ENCODE measurements at regions of chr2 and their contacts with region 1.

Region 1: DNA sequence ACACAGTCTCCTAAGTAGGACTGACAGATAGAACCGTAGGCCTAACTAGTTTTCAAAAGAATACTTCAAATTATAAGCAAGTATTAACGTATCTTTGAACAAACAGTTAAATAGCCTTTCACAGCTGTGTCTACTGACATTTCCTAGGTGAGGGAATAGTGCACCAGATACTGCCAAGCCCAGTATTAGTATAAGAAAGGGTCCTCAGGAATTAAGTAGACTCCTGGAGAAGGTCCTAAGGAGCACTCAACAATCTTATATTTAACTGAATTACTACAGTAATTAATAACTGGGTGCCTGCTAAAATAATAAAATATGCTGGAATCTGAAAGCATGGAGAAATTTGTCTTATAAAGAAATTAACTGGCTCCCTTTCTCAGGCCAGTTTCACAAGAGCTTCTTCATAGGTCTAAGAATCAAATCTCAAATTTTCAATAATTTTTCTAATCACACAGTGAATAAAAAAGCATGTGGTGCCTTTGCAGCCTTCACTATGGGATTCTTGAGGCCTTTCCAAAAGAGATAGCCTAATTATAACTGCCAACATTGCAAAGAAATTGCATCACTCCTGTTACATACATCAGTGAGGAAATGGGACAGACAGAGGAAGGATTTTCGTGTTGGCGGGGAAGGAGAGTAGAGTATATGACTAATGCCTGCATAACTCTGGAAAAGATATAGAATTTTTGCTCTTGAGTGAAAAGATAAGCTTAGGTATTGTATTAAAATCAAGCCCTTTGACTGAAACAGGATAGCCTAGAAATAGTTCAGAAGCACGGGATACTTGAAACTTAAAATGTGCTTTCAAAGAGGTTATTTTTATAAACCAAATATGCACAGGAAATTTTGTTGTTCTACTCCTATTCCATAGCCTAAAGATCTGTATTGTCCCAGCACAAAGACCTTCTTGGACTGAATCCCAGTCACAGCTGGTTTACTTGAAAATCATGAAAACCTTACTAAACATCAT is 228.6 kb upstream of the STK17B start:
- DNase-seq: peak; percentile 97
- H3K4me3 ChIP-seq: no peak overlapping the region
- H3K27ac ChIP-seq: peak overlapping the region; percentile 94
- H3K4me1 ChIP-seq: peaks cover 58% of the 10 kb centered on the region
- H3K27me3 ChIP-seq: no peaks in the 10 kb centered on the region
- CTCF ChIP-seq: no peak
- POLR2A ChIP-seq: peak; percentile 66

Region 2: GRCh38 chr2:196259507-196260481 is 140.2 kb before region 1 on chr2:
- CTCF ChIA-PET with region 1: no interaction called
- POLR2A ChIA-PET with region 1: no interaction called
- dilution Hi-C with region 1: no loop called
- intact Hi-C with region 1: no loop called
- DNase-seq: peak; percentile 76
- H3K4me3 ChIP-seq: no peak overlapping the region
- H3K27ac ChIP-seq: peak overlapping the region; percentile 74
- H3K4me1 ChIP-seq: peaks cover 41% of the 10 kb centered on the region
- H3K27me3 ChIP-seq: no peaks in the 10 kb centered on the region
- CTCF ChIP-seq: no peak
- POLR2A ChIP-seq: peak; percentile 17

Region 3: GRCh38 chr2:196277002-196277401 is 123.0 kb before region 1 on chr2:
- CTCF ChIA-PET with region 1: interaction called, 6 read pairs
- POLR2A ChIA-PET with region 1: interaction called, 3 read pairs
- dilution Hi-C with region 1: no loop called
- intact Hi-C with region 1: loop called (anchors 1 kb)
- DNase-seq: peak; percentile 46
- H3K4me3 ChIP-seq: peak overlapping the region in 2 of 3 experiments; percentile 38 to 60
- H3K27ac ChIP-seq: peak overlapping the region; percentile 14
- H3K4me1 ChIP-seq: peaks cover 58% of the 10 kb centered on the region
- H3K27me3 ChIP-seq: no peaks in the 10 kb centered on the region
- CTCF ChIP-seq: peak; percentile 32 to 41
- POLR2A ChIP-seq: no peak

Region 4: GRCh38 chr2:196337208-196337953 is 62.6 kb before region 1 on chr2:
- CTCF ChIA-PET with region 1: interaction called, 23 read pairs
- POLR2A ChIA-PET with region 1: no interaction called
- dilution Hi-C with region 1: no loop called
- intact Hi-C with region 1: loop called (anchors 1 kb)
- DNase-seq: peak; percentile 43
- H3K4me3 ChIP-seq: no peak overlapping the region
- H3K27ac ChIP-seq: no peak overlapping the region
- H3K4me1 ChIP-seq: peaks cover 29% of the 10 kb centered on the region
- H3K27me3 ChIP-seq: no peaks in the 10 kb centered on the region
- CTCF ChIP-seq: peak; percentile 26 to 40
- POLR2A ChIP-seq: no peak

Region 5: DNA sequence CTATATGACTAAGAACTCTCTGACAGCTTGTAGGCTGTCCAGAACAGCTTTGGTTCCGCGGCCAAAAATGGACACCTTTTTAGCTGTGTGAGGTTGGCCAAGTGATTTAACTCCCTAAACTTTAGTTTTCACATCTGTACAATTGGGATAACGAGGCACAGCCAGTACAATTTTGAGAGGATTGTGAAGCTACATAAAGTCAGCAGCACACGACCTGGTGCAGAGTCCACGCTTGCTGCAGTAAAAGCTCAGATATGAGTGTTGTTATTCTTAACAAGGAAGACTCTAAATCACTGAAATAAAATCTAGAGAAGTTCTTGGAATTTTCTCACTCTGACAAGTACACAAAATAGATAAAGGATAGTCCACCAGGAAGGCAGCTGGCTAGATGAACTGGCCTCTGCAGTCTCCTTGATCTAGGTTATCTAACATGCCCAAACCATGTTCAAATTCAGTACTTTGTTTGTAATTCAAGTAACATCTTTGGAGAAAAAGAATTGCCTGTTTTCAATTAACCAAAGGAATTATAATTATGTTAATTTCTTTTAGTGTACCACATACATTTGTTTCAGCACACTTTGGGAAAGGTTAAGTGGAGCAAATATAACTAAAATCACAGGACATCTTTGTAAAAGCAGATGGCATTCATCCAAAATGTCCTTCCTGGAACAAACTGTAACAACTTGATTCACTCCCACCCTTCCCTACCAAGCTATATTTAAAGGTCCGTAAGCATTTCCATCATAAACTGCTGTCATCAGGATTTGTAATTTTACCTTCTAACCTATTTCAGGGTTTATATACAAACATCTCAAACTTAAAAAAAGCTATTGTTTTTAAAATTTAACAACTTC is 27.0 kb before region 1 on chr2:
- CTCF ChIA-PET with region 1: interaction called, 4 read pairs
- POLR2A ChIA-PET with region 1: no interaction called
- dilution Hi-C with region 1: no loop called
- intact Hi-C with region 1: loop called (anchors 1 kb)
- DNase-seq: peak; percentile 80
- H3K4me3 ChIP-seq: no peak overlapping the region
- H3K27ac ChIP-seq: peak overlapping the region; percentile 29
- H3K4me1 ChIP-seq: peaks cover 25% of the 10 kb centered on the region
- H3K27me3 ChIP-seq: no peaks in the 10 kb centered on the region
- CTCF ChIP-seq: no peak
- POLR2A ChIP-seq: no peak

Region 6: DNA sequence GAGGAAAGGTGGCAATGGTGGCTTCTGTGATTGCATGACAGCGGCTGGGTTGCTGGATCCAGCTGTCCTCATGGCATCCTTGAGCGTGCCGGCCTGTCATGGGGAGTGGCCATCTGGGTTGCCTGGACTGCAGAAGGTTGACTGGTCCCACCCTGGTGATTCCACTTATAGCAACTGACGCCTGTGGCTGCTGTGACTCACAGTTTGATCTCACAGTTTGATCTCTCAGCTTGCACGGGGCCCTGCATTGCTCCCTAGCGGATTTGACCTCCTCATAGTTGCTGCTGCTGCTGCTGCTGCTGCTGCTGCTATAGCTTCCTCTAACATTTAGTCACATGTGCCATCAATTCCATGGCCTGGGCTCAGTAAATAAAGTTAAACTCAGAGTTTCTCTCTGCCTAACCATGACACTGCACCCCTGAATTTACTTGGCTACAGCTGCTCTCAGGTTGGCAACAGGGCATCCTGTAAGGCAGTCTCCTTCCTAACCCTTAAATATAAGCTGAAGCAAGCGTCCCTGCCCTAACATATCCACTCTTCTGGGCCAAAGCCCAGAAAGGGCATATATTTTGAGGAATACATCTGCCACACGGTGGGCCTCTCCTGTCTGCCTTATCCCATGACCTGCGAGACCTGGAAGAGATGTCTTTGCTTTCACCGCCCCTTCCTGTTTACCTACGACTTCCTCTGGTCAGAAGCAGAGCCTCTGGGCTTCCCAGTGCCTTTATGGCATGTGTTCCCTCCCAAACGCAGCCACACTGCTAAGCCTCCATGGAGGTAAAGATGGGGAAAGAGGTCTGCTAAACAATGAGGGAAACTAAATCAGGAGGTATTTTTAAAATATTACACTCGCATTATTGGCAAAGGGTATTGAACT is 201.7 kb after region 1 on chr2:
- CTCF ChIA-PET with region 1: no interaction called
- POLR2A ChIA-PET with region 1: no interaction called
- dilution Hi-C with region 1: no loop called
- intact Hi-C with region 1: loop called (anchors 1 kb)
- DNase-seq: peak; percentile 88
- H3K4me3 ChIP-seq: no peak overlapping the region
- H3K27ac ChIP-seq: peak overlapping the region; percentile 82
- H3K4me1 ChIP-seq: peaks cover 25% of the 10 kb centered on the region
- H3K27me3 ChIP-seq: no peaks in the 10 kb centered on the region
- CTCF ChIP-seq: no peak
- POLR2A ChIP-seq: no peak

Region 7: DNA sequence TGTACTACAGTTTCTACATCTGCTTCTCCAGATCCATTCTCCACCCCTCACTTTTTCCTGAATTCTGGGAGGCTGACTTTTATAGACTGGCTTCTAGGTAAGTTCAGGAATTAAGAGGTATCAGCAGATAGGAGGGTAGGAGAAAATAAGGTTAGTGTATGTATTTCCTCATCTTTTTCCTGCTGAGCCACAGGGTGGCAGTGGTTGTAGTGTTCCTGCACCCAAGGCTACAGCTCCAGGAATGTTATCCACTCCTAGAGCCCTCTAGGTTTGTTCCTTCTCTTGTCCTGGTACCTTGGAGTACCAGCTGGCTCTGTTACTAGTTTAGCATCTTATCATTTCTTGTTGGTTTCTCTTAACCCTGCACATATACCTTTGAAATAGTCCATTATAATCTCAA is 449.9 kb after region 1 on chr2:
- CTCF ChIA-PET with region 1: no interaction called
- POLR2A ChIA-PET with region 1: no interaction called
- dilution Hi-C with region 1: no loop called
- intact Hi-C with region 1: no loop called
- DNase-seq: peak; percentile 43
- H3K4me3 ChIP-seq: no peak overlapping the region
- H3K27ac ChIP-seq: no peak overlapping the region
- H3K4me1 ChIP-seq: peaks cover 17% of the 10 kb centered on the region
- H3K27me3 ChIP-seq: no peaks in the 10 kb centered on the region
- CTCF ChIP-seq: peak; percentile 27 to 32
- POLR2A ChIP-seq: no peak

Measured in endothelial cell of umbilical vein (primary cell).